ENCODE measurements at regions of chr1 and their contacts with region 1.

Region 1: GRCh38 chr1:1019122-1019999 is 559 bp upstream of the AGRN start:
- DNase-seq: peak; percentile 90
- ATAC-seq: peak; percentile 75
- H3K4me3 Mint-ChIP-seq: peak overlapping the region; percentile 59
- H3K27ac Mint-ChIP-seq: no peak overlapping the region
- H3K4me1 Mint-ChIP-seq: peaks cover 15% of the 10 kb centered on the region
- H3K27me3 Mint-ChIP-seq: peaks cover 9% of the 10 kb centered on the region

Region 2: DNA sequence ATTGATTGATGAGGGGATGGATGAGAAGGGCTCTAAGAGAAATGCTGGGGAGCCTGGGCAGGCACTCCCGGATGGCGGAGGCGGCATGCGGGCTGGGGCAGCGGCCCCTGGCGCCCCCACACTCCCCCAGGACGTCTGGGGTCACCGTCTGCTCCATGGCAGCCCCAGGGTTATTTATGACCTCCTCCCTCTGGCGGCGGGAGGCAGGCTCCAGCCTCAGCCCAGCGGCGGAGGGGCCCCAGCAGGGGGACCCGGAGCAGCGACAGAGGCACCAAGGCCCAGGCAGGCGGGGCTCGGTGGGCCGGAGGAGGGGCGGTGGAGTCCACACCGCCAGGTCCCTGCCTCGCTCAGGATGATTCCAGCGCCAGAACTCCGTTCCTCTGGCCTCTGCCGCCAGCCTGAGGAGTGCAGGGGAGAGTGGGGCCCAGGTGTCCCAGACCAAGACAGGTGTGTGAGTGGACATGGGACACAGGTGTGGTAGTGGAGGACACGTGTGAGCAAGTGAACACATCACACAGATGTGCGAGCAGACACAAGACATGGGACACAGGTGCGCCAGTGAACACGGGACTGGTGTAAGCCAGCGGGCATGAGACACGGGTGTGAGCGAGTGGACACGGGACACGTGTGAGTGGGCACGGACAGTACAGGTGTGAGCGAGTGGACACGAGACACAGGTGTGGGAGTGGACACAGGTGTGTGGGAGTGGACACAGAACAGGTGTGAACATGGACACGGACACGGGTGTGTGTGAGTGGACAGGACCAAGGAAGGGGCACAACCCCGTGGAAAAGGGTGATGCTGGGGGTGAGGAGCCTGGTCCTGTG is 98.1 kb before region 1 on chr1:
- CTCF ChIA-PET with region 1: no interaction called
- POLR2A ChIA-PET with region 1: no interaction called
- intact Hi-C with region 1: no loop called
- DNase-seq: peak; percentile 52
- ATAC-seq: peak; percentile 42
- H3K4me3 Mint-ChIP-seq: no peak overlapping the region
- H3K27ac Mint-ChIP-seq: no peak overlapping the region
- H3K4me1 Mint-ChIP-seq: peaks cover 12% of the 10 kb centered on the region
- H3K27me3 Mint-ChIP-seq: peaks cover 42% of the 10 kb centered on the region

Region 3: GRCh38 chr1:983799-984473 is 35.4 kb before region 1 on chr1:
- CTCF ChIA-PET with region 1: interaction called, 4 read pairs
- POLR2A ChIA-PET with region 1: no interaction called
- intact Hi-C with region 1: loop called in 1 of 2 experiments (anchors 5 kb)
- DNase-seq: peak; percentile 80
- ATAC-seq: peak; percentile 82
- H3K4me3 Mint-ChIP-seq: no peak overlapping the region
- H3K27ac Mint-ChIP-seq: no peak overlapping the region
- H3K4me1 Mint-ChIP-seq: no peaks in the 10 kb centered on the region
- H3K27me3 Mint-ChIP-seq: peaks cover 18% of the 10 kb centered on the region

Region 4: GRCh38 chr1:1033009-1033587 is 13.7 kb after region 1 on chr1:
- CTCF ChIA-PET with region 1: interaction called, 6 read pairs
- POLR2A ChIA-PET with region 1: interaction called, 3 read pairs
- intact Hi-C with region 1: loop called (anchors 1 to 2 kb)
- DNase-seq: peak; percentile 97
- ATAC-seq: peak; percentile 95
- H3K4me3 Mint-ChIP-seq: peak overlapping the region; percentile 33
- H3K27ac Mint-ChIP-seq: no peak overlapping the region
- H3K4me1 Mint-ChIP-seq: peaks cover 5% of the 10 kb centered on the region
- H3K27me3 Mint-ChIP-seq: peaks cover 18% of the 10 kb centered on the region

Region 5: GRCh38 chr1:1069061-1069708 is 49.8 kb after region 1 on chr1:
- CTCF ChIA-PET with region 1: interaction called, 4 read pairs
- POLR2A ChIA-PET with region 1: no interaction called
- intact Hi-C with region 1: loop called (anchors 1 kb)
- DNase-seq: peak; percentile 94
- ATAC-seq: peak; percentile 47
- H3K4me3 Mint-ChIP-seq: peak overlapping the region; percentile 71
- H3K27ac Mint-ChIP-seq: no peak overlapping the region
- H3K4me1 Mint-ChIP-seq: peaks cover 11% of the 10 kb centered on the region
- H3K27me3 Mint-ChIP-seq: no peaks in the 10 kb centered on the region

Measured in activated CD4-positive, alpha-beta T cell treated with anti-CD3 and anti-CD28 coated beads for 36 hours (primary cell).